Heart right ventricle (tissue), 16 donors: ENCODE measurements at regions of chr9 and their contacts with region 1.

Region 1: DNA sequence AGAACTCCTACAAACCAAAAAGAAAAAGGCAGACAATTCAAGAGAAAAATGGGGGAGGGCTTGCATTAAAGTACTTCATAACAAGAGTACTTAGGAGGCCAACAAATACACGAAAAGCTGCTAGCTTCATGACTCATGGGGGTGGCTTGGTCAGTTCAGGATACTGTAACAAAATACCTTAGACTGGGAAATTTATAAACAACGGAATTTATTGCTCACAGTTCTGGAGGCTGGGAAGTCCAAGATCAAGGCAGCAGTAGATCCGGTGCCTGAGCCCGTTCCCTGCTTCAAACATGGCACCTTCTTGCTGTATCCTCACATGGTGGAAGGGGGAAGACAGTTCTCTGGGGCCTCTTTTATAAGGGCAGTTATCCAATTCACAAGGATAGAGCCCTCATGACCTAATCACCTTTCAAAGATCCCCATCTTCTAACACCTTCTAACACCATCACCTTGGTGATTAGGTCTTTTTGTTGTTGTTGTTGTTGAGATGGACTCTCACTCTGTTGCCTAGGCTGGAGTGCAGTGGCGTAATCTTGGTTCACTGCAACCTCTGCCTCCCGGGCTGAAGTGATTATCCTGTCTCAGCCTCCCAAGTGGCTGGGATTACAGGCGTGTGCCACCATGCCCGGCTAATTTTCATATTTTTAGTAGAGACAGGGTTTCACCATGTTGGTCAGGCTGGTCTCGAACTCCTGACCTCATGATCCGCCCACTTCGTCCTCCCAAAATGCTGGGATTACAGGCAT is 111.2 kb downstream of the C9orf50 start:
- DNase-seq: no peak
- ATAC-seq: no peak
- H3K4me3 ChIP-seq: no peak overlapping the region
- H3K27ac ChIP-seq: no peak overlapping the region
- H3K4me1 ChIP-seq: no peaks in the 10 kb centered on the region
- H3K27me3 ChIP-seq: no peaks in the 10 kb centered on the region
- CTCF ChIP-seq: no peak

Region 2: GRCh38 chr9:129550199-129550839 is 40.6 kb after region 1 on chr9:
- intact Hi-C with region 1: loop called in 4 of 10 experiments (anchors 5 to 10 kb)
- DNase-seq: peak; percentile 76 to 89
- ATAC-seq: peak; percentile 80 to 93 (median 88)
- H3K4me3 ChIP-seq: peak overlapping the region; percentile 19 to 65 (median 54)
- H3K27ac ChIP-seq: peak overlapping the region; percentile 64 to 91 (median 82)
- H3K4me1 ChIP-seq: peaks cover 16 to 32% (median 27%) of the 10 kb centered on the region in 9 donors
- H3K27me3 ChIP-seq: peaks cover 0 to 22% (median 0%) of the 10 kb centered on the region in 7 donors
- CTCF ChIP-seq: peak in 1 of 9 donors; percentile 7

Region 3: DNA sequence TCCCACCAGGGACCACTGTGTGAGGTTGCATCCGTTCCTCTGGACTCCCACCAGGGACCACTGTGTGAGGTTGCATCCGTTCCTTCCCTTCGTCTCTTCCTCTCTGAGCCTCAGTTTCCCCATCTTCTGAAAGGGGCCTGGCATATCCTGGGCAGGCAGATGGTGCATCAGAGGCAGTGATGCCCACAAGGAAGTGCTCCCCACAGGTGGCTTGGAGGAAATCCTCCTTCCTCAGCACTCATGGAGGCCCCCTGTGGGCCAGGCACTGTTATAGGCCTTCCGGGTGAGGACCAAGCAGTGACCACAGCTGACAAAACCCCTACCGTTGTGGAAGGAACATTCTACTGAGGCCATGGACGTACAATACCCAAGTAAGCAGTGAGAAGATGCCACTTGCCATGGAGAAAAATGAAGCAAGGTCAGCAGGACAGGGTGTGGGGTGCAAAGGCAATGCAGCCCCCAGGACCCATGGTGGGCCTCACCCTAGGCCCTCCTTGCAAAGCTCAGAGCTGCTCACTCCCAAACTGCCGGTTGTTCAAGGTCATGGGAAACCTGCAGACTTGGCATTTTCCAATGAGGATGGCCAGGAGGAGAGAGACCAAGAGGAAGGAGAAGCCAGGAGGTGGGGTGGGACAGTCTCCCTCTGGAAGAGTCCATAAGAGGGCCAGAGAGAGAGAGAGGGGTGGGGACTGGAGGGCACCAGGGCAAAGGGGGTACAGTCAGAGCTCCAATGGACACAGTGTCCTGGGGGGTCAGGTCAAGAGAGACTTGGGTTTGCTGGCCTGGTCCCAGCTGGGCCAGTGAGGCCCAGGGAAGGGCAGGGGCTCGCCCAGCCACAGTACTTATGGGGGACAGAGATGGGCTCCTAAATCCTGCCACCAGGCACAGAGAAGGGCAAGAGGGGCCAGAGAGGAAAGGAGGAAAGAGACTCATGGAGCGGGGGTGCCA is 60.1 kb after region 1 on chr9:
- intact Hi-C with region 1: loop called in 3 of 10 experiments (anchors 5 to 10 kb)
- DNase-seq: no peak
- ATAC-seq: peak in 7 of 8 donors; percentile 11 to 57 (median 41)
- H3K4me3 ChIP-seq: peak overlapping the region in 8 of 10 donors; percentile 46 to 60 (median 53)
- H3K27ac ChIP-seq: peak overlapping the region in 9 of 10 donors; percentile 38 to 82 (median 78)
- H3K4me1 ChIP-seq: peaks cover 12 to 38% (median 29%) of the 10 kb centered on the region in 9 donors
- H3K27me3 ChIP-seq: peaks cover 0 to 32% (median 0%) of the 10 kb centered on the region in 7 donors
- CTCF ChIP-seq: peak in 7 of 9 donors; percentile 35 to 56 (median 43)

Region 4: GRCh38 chr9:130107234-130107861 is 597.7 kb after region 1 on chr9:
- intact Hi-C with region 1: no loop called
- DNase-seq: peak; percentile 75 to 85
- ATAC-seq: peak; percentile 69 to 88 (median 80)
- H3K4me3 ChIP-seq: no peak overlapping the region
- H3K27ac ChIP-seq: no peak overlapping the region
- H3K4me1 ChIP-seq: peaks cover 0 to 13% (median under 1%) of the 10 kb centered on the region in 9 donors
- H3K27me3 ChIP-seq: no peaks in the 10 kb centered on the region
- CTCF ChIP-seq: peak; percentile 59 to 86 (median 79)